ENCODE measurements at regions of chr22 and their contacts with region 1.

Region 1: DNA sequence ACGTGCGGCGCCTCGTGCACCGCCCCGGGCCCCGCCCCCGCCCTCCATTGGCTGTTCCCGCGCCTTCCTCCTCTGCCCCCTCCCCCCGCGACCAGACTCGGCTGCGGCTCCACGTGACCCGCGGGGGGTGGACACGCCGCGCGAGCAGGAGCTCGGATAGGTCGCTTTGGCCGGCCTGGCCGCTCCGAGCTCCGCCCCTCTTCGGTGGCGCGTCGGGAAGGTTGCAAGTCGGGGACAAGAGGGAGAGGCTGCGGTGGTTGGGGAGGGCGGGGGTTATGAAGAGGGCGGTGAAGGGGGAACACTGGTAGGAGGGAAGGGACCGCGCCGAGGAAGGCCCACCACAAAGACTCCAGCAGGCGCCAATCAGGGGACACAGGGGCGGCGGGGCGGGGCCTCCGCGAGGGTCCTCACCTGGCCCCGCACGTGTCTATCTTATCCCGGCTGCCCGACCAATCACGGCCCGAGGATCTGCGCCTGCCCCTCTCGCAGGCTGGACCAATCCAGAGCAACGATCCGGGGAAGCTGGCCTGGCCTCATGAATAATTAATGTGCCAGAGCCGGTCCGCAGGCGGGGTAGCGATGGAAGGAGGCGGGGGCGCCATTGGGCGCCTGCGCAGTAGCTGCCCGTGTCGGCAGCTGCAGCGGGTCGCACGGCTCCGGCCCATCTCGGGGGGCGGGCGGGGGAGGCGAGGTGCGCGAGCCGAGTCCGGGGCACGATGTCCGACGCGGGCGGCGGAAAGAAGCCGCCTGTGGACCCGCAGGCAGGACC is at the start of gene TEF:
- DNase-seq: peak; percentile 97
- ATAC-seq: peak; percentile 90
- H3K4me3 ChIP-seq: peak within 1 kb of the TSS; percentile 76 to 84 (median 80)
- H3K27ac ChIP-seq: peak within 1 kb of the TSS; percentile 98
- H3K4me1 ChIP-seq: peaks cover 24% of the 10 kb centered on the region
- H3K27me3 ChIP-seq: no peaks in the 10 kb centered on the region; a peak in 1 of 5 replicates
- CTCF ChIP-seq: no peak
- EP300 ChIP-seq: 0 out of 4 replicates have a peak, but pooled peaks of 1 of the 2 experiments have one; percentile 29
- POLR2A ChIP-seq: no peak
- RAD21 ChIP-seq: no peak
- total RNA-seq, gene TEF: 7.6 and 8.2 TPM in 2 replicates

Region 2: GRCh38 chr22:41301105-41302020 is 80.2 kb before region 1 on chr22 and contains the start of gene ZC3H7B:
- CTCF ChIA-PET with region 1: no interaction called
- POLR2A ChIA-PET with region 1: interaction called, 21 read pairs
- in situ Hi-C with region 1: no loop called
- intact Hi-C with region 1: no loop called
- DNase-seq: peak; percentile 76
- ATAC-seq: peak; percentile 97
- H3K4me3 ChIP-seq: peak within 1 kb of the TSS; percentile 88 to 98 (median 93)
- H3K27ac ChIP-seq: peak within 1 kb of the TSS; percentile 82
- H3K4me1 ChIP-seq: peaks cover 56% of the 10 kb centered on the region
- H3K27me3 ChIP-seq: no peaks in the 10 kb centered on the region
- CTCF ChIP-seq: peak; percentile 74
- EP300 ChIP-seq: no peak
- POLR2A ChIP-seq: peak; percentile 69 to 90
- RAD21 ChIP-seq: peak; percentile 71
- total RNA-seq, gene ZC3H7B: 30.6 and 37.2 TPM in 2 replicates

Region 3: GRCh38 chr22:41367039-41367679 is 14.4 kb before region 1 on chr22:
- CTCF ChIA-PET with region 1: no interaction called
- POLR2A ChIA-PET with region 1: interaction called, 135 read pairs
- in situ Hi-C with region 1: no loop called
- intact Hi-C with region 1: no loop called
- DNase-seq: peak; percentile 80
- ATAC-seq: peak; percentile 89
- H3K4me3 ChIP-seq: peak overlapping the region in 2 of 3 experiments; percentile 34 to 61; a peak in 3 of 6 replicates
- H3K27ac ChIP-seq: no peak overlapping the region
- H3K4me1 ChIP-seq: peaks cover 53% of the 10 kb centered on the region
- H3K27me3 ChIP-seq: no peaks in the 10 kb centered on the region; a peak in 1 of 5 replicates
- CTCF ChIP-seq: peak; percentile 68
- EP300 ChIP-seq: no peak
- POLR2A ChIP-seq: peak; percentile 27; a peak in 1 of 4 replicates
- RAD21 ChIP-seq: peak; percentile 60

Region 4: DNA sequence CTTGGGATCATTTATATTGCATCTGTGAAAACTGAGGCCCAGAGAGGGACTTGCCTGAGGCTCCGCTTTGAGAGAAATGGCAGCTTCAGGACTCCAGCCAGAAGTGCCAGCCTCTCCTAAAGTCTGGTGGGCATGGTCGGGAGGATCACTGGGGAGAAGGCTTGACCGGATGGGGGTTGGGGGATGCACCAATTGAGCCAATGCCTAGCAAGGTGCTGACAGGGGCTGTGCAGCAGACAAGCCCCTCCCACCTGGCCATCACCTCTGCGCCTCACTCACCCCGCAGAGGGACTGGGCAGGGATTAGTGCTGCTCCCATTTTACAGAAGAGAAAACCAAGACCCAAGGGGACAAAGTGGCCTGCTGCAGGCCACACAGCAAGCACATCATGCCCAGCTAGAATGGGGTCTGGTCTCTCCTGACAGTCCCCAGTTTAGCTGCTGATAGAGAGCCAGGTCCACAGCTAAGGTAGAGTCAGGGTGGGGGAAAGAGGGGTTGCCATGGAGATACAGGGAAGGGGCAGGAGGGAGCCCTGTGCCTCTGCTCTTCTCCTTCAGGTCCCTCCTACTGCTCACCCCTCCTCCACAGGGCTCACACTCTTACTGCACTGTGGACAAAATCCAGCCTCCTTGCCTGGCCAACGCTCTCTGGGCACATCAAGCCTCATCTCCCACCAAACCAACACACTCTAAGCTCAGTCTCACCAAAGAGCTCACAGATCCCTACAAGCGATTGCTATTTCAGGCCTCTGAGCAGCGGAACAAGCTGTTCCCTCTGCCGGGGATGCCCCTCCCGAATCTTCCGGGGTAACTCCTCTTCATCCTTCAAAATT is 29.7 kb after region 1 on chr22:
- CTCF ChIA-PET with region 1: no interaction called
- POLR2A ChIA-PET with region 1: interaction called, 12 read pairs
- in situ Hi-C with region 1: no loop called
- intact Hi-C with region 1: no loop called
- DNase-seq: no peak
- ATAC-seq: no peak; the same call in 2 of the 3 replicates
- H3K4me3 ChIP-seq: no peak overlapping the region; a peak in 1 of 6 replicates
- H3K27ac ChIP-seq: no peak overlapping the region
- H3K4me1 ChIP-seq: peaks cover 63% of the 10 kb centered on the region
- H3K27me3 ChIP-seq: peaks cover 0 to 1% of the 10 kb centered on the region in 2 experiments; a peak in 2 of 5 replicates
- CTCF ChIP-seq: no peak
- EP300 ChIP-seq: no peak
- POLR2A ChIP-seq: no peak
- RAD21 ChIP-seq: no peak

Region 5: GRCh38 chr22:41543854-41544670 is 162.5 kb after region 1 on chr22 and contains the start of gene POLR3H:
- CTCF ChIA-PET with region 1: no interaction called
- POLR2A ChIA-PET with region 1: interaction called, 11 read pairs
- in situ Hi-C with region 1: no loop called
- intact Hi-C with region 1: no loop called
- DNase-seq: peak; percentile 95
- ATAC-seq: peak; percentile 83
- H3K4me3 ChIP-seq: peak within 1 kb of the TSS; percentile 74 to 89 (median 85)
- H3K27ac ChIP-seq: peak within 1 kb of the TSS; percentile 72
- H3K4me1 ChIP-seq: peaks cover 78% of the 10 kb centered on the region
- H3K27me3 ChIP-seq: no peaks in the 10 kb centered on the region
- CTCF ChIP-seq: peak; percentile 93
- EP300 ChIP-seq: peak in 1 of 2 experiments; percentile 48; a peak in 1 of 4 replicates
- POLR2A ChIP-seq: peak in 1 of 2 experiments; percentile 58; a peak in 1 of 4 replicates
- RAD21 ChIP-seq: peak; percentile 46; the same call in 1 of the 2 replicates
- total RNA-seq, gene POLR3H: 28.6 and 30.3 TPM in 2 replicates

Measured in HepG2 (cell line).